ENCODE measurements at regions of chr5 and their contacts with region 1.

Region 1: DNA sequence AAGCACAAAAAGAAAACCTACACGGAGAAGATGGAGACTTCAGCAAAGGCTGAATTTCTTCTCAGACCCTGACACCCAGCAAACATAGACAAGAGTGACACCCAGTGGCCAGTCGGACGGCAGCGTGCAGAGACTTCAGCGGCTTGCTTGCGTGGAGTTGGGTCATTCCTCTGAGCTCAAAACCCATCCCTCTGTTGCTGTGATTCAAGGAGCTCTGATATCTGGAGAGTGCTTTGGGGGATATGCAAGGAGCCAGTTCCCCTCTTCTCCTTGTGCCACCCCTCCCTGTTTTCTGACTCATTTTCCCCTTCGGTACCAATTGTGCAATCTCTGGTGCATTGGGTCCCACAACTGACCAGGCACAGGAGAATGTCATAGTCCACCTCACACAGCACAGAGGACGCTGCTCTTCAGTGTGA is 27.5 kb downstream of the SH3TC2 start:
- DNase-seq: peak; percentile 86
- ATAC-seq: peak; percentile 85
- H3K4me3 Mint-ChIP-seq: no peak overlapping the region
- H3K27ac Mint-ChIP-seq: no peak overlapping the region
- H3K4me1 Mint-ChIP-seq: peaks cover 18% of the 10 kb centered on the region
- H3K27me3 Mint-ChIP-seq: peaks cover 2% of the 10 kb centered on the region

Region 2: GRCh38 chr5:148443998-148444397 is 591.4 kb before region 1 on chr5:
- CTCF ChIA-PET with region 1: interaction called, 3 read pairs
- POLR2A ChIA-PET with region 1: interaction called, 4 read pairs
- intact Hi-C with region 1: loop called in 1 of 2 experiments (anchors 5 kb)
- DNase-seq: peak; percentile 63
- ATAC-seq: peak; percentile 83
- H3K4me3 Mint-ChIP-seq: no peak overlapping the region
- H3K27ac Mint-ChIP-seq: no peak overlapping the region
- H3K4me1 Mint-ChIP-seq: no peaks in the 10 kb centered on the region
- H3K27me3 Mint-ChIP-seq: no peaks in the 10 kb centered on the region

Region 3: GRCh38 chr5:148820461-148821395 is 214.7 kb before region 1 on chr5:
- CTCF ChIA-PET with region 1: interaction called, 4 read pairs
- POLR2A ChIA-PET with region 1: no interaction called
- intact Hi-C with region 1: loop called (anchors 1 to 10 kb)
- DNase-seq: peak; percentile 32
- ATAC-seq: peak; percentile 30
- H3K4me3 Mint-ChIP-seq: no peak overlapping the region
- H3K27ac Mint-ChIP-seq: no peak overlapping the region
- H3K4me1 Mint-ChIP-seq: peaks cover 3% of the 10 kb centered on the region
- H3K27me3 Mint-ChIP-seq: peaks cover 15% of the 10 kb centered on the region

Region 4: DNA sequence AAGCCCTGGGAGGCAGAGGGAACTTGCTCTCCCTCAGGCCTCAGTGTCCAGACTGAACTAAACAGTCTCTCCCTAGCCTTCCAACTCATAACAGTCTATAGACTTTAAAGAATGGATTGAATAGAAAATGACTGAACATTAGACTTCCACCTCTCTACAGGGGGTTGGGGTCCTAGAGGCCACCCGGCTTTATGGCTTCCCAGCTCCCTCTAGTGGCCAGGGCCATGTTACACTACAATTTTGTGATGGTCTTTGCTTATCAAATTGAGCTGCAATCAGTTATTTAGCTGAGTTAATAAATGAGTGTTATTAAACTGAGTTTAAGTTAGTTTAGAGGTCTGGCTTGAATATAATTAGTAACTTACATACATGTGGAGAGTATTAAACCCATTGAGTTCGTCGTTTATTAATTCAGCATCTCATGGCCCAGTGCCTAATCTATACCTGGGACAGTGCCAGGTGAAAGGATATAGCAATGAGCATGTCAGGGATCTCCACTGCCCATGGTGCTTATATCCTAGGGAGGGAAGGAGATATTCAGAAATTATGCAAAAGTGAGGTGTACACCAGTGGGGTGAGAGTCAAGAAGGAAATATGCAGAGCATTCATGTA is 77.7 kb before region 1 on chr5:
- CTCF ChIA-PET with region 1: interaction called, 22 read pairs
- POLR2A ChIA-PET with region 1: no interaction called
- intact Hi-C with region 1: loop called (anchors 2 kb)
- DNase-seq: peak; percentile 68
- ATAC-seq: peak; percentile 57
- H3K4me3 Mint-ChIP-seq: no peak overlapping the region
- H3K27ac Mint-ChIP-seq: no peak overlapping the region
- H3K4me1 Mint-ChIP-seq: no peaks in the 10 kb centered on the region
- H3K27me3 Mint-ChIP-seq: no peaks in the 10 kb centered on the region

Region 5: GRCh38 chr5:149018909-149019443 is 16.4 kb before region 1 on chr5:
- CTCF ChIA-PET with region 1: interaction called, 11 read pairs
- POLR2A ChIA-PET with region 1: no interaction called
- intact Hi-C with region 1: no loop called
- DNase-seq: peak; percentile 21
- ATAC-seq: peak; percentile 70
- H3K4me3 Mint-ChIP-seq: no peak overlapping the region
- H3K27ac Mint-ChIP-seq: no peak overlapping the region
- H3K4me1 Mint-ChIP-seq: peaks cover 12% of the 10 kb centered on the region
- H3K27me3 Mint-ChIP-seq: peaks cover 6% of the 10 kb centered on the region

Region 6: DNA sequence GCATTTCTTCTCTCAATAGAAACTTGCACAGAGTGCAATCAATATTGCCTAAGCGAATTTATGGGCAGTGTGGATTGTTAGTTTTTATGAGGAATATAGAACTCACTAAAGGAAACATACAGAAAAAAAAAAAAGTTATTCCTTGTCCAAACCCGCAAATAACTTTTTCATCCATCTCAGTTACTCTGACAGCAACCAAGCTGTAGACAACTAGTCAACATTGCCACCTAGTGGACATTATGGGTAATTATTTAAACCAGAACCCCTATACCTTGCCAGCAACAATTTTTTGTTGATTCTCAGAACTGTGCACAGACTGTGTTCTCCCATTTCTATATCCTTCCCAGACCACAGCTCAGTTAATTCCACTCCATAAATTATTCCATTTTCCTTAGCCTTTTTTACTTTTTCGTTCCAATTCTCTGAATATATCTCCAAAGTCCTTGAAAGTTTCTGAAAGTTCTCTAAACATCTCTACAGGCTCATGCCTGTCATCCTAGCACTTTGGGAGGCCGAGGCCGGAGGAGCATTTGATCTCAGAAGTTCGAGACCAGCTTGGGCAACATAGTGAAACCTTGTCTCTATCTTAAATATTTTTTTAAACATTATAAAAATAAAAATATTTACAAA is 233.7 kb after region 1 on chr5:
- CTCF ChIA-PET with region 1: interaction called, 5 read pairs
- POLR2A ChIA-PET with region 1: no interaction called
- intact Hi-C with region 1: loop called in 1 of 2 experiments (anchors 5 kb)
- DNase-seq: no peak
- ATAC-seq: peak; percentile 45
- H3K4me3 Mint-ChIP-seq: no peak overlapping the region
- H3K27ac Mint-ChIP-seq: no peak overlapping the region
- H3K4me1 Mint-ChIP-seq: peaks cover 13% of the 10 kb centered on the region
- H3K27me3 Mint-ChIP-seq: peaks cover 23% of the 10 kb centered on the region